PC-9 (cell line): ENCODE measurements at regions of chr6 and their contacts with region 1.

Region 1: DNA sequence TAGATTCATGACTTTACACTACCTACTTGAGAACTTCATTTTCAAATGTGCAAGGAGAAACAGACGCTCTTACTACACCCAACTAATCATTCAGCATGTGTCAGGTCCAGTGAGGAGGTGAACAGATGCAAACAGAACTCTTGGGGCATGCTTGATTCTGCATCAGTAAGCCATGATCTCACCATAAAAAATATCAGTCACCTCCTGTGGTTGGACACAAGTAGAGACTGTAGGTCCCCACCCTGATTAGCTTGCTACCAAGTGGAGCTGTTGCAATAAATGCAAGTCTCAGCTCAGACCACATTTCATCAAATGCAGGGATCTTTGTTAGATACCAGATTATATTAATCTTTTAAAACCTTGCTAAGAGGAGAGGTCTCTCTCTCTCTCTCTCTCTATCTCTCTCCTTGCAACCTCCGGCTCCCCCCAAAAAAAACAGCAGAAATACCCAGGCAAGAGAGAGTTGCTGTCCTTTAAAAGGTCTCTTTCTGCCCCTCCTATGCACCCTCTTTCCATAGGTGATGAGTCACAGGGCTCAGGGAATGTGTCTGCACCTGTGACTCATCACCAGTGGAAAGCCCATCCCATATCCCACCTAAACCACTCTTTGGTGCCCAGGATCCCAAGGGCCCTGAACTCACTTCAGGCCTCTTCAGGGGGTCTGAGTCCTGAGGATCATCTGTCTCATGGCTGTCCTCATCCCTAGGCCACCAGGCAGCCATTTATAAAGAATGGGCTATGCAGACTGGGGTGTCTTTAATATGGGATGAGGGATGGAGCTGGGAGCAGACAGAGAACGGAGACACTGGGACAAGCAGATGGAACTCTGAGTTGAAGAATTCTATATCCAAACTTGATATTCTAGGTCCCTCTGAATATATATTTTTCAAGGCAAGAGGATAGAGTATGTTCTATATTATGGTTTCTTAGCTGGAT is 154.5 kb downstream of the QRSL1 start:
- DNase-seq: peak; percentile 45 to 85
- H3K4me3 ChIP-seq: no peak overlapping the region; the same call in 1 of the 2 replicates
- H3K27ac ChIP-seq: peak overlapping the region; percentile 84
- H3K4me1 ChIP-seq: peaks cover 25% of the 10 kb centered on the region
- H3K27me3 ChIP-seq: no peaks in the 10 kb centered on the region
- CTCF ChIP-seq: no peak

Region 2: DNA sequence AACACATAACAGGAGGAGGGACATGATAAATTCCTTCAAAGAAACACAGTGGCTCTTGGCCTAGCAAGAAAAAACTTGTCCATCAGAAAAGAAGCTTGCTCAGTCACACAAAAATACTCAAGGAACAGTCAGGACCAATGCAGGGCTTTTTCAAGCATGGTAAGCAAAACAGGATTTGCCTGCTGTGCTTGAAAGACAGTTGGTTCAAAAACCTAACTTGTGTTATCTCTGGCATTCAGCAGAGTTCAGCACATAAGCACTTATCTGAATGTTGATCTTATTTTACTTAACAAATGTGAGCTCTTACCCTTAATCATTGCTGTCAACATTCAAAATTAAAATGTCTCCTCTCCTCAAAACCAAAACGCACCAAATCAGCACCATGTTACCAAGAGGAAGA is 496.7 kb before region 1 on chr6:
- CTCF ChIA-PET with region 1: no interaction called
- POLR2A ChIA-PET with region 1: interaction called, 13 read pairs
- intact Hi-C with region 1: no loop called
- DNase-seq: no peak
- H3K4me3 ChIP-seq: no peak overlapping the region
- H3K27ac ChIP-seq: no peak overlapping the region
- H3K4me1 ChIP-seq: no peaks in the 10 kb centered on the region
- H3K27me3 ChIP-seq: no peaks in the 10 kb centered on the region
- CTCF ChIP-seq: no peak